ENCODE measurements at regions of chr11 and their contacts with region 1.

Region 1: GRCh38 chr11:69576069-69576782 is 64.7 kb upstream of the CCND1 start:
- DNase-seq: peak; percentile 54 to 68
- H3K4me3 ChIP-seq: no peak overlapping the region
- H3K4me3 Mint-ChIP-seq: no peak overlapping the region
- H3K27ac Mint-ChIP-seq: no peak overlapping the region
- H3K4me1 ChIP-seq: peaks cover 20% of the 10 kb centered on the region
- H3K4me1 Mint-ChIP-seq: peaks cover 10% of the 10 kb centered on the region
- H3K27me3 ChIP-seq: no peaks in the 10 kb centered on the region
- H3K27me3 Mint-ChIP-seq: no peaks in the 10 kb centered on the region
- CTCF ChIP-seq: no peak

Region 2: DNA sequence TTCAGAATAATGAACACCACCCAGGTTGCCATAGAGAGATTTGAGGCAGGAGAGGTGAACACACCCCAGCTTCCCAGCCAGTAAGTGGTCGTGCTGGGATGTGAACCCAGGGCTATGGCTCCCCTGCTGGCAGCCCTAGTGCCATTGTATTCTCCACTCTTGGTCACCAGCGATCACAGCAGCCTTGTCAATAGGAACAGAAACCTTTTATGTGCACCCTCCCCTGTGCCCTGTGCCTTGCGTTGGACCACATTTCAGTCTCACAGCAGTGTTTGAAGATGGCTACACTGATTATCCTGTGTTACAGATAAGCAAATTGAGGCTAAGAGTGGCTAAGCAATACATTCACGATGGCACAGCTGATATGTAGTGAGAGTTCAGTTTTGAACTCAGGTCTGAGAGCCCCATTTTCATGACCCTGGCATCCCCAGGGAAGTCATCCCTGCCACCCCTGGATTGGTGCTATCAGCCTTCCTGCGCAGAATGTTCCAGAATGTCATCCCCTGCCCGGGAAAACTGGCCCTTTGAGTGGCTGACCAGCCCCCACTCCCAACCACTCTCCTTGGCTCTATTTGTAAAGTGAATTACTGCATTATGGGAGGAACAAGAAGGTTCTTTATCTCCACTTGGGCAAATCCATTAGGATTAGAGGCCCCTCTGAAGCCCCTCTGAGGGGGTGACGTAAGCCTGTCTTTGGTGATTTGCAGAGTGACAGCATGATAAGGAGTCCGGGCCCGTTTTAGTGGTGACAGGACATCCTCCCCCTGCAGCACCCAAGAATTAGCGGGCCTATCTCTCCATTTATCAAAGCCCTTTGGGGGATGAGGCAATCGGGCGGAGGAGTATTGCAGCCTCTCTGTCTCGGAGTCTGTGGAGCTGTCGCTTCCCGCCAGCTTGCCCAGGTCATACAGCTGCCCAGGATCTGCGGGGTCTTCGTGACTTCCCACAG is 389.6 kb before region 1 on chr11:
- CTCF ChIA-PET with region 1: no interaction called
- POLR2A ChIA-PET with region 1: no interaction called
- intact Hi-C with region 1: no loop called
- DNase-seq: peak in 1 of 2 experiments; percentile 36
- H3K4me3 ChIP-seq: no peak overlapping the region
- H3K4me3 Mint-ChIP-seq: no peak overlapping the region
- H3K27ac Mint-ChIP-seq: no peak overlapping the region
- H3K4me1 ChIP-seq: no peaks in the 10 kb centered on the region
- H3K4me1 Mint-ChIP-seq: no peaks in the 10 kb centered on the region
- H3K27me3 ChIP-seq: no peaks in the 10 kb centered on the region
- H3K27me3 Mint-ChIP-seq: no peaks in the 10 kb centered on the region
- CTCF ChIP-seq: peak; percentile 23 to 33

Region 3: GRCh38 chr11:69504576-69505335 is 71.5 kb before region 1 on chr11:
- CTCF ChIA-PET with region 1: no interaction called
- POLR2A ChIA-PET with region 1: no interaction called
- intact Hi-C with region 1: no loop called
- DNase-seq: peak in 1 of 2 experiments; percentile 36
- H3K4me3 ChIP-seq: no peak overlapping the region
- H3K4me3 Mint-ChIP-seq: no peak overlapping the region
- H3K27ac Mint-ChIP-seq: peak overlapping the region; percentile 33
- H3K4me1 ChIP-seq: peaks cover 11% of the 10 kb centered on the region; the same call in 1 of the 2 replicates
- H3K4me1 Mint-ChIP-seq: peaks cover 14% of the 10 kb centered on the region
- H3K27me3 ChIP-seq: no peaks in the 10 kb centered on the region
- H3K27me3 Mint-ChIP-seq: no peaks in the 10 kb centered on the region
- CTCF ChIP-seq: no peak

Region 4: DNA sequence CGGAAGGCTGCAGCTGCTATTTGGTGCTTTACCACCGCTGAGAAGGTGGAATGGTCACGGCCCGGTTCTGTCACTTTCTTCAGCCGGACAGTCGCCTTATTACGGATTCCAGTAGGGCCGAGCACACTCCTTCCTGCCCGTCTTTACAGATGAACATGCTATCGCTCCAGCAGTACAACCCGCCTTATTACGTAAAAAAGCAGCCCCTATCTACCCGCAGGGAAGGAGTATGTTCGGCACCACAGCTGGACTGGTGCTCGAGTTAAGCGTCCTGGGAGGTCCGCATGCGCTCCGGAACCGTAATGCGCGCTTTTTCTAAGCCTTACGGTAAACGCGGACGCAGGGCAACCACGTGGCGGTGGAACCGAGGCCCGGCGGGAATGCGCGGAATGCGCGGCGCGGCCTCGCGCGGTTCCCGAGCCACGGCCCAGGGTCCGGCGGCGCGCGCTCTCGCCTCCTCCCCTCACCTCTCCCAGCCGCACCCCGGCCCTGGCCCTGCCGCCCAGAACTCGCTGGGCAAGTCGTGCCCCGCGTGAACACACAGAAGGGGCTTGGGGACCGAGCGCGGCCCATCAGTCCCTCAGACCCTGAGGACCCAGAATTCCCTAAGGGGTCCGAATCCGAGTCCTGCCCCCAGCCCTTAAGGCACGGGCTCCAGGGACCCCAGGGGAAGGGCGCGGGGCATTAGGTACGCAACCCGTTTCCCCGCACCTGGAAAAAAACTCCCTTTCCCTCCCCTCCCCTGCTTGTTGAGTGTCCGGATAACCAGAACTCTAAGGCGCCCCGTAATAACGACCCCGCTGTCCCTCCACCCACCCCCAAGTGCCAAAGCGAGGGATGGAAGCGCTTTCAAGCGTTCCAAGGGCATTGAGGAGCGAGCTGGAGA is 60.3 kb after region 1 on chr11:
- CTCF ChIA-PET with region 1: no interaction called
- POLR2A ChIA-PET with region 1: no interaction called
- intact Hi-C with region 1: loop called (anchors 2 kb)
- DNase-seq: peak; percentile 97 to 98
- H3K4me3 ChIP-seq: peak overlapping the region; percentile 73
- H3K4me3 Mint-ChIP-seq: peak overlapping the region; percentile 96
- H3K27ac Mint-ChIP-seq: peak overlapping the region; percentile 97
- H3K4me1 ChIP-seq: peaks cover 19% of the 10 kb centered on the region
- H3K4me1 Mint-ChIP-seq: peaks cover 25% of the 10 kb centered on the region
- H3K27me3 ChIP-seq: no peaks in the 10 kb centered on the region
- H3K27me3 Mint-ChIP-seq: no peaks in the 10 kb centered on the region
- CTCF ChIP-seq: no peak